ENCODE measurements at regions of chr14 and their contacts with region 1.

Region 1: GRCh38 chr14:75278422-75279161 is at the start of gene FOS:
- DNase-seq: peak; percentile 96
- ATAC-seq: peak; percentile 77
- H3K4me3 ChIP-seq: peak within 1 kb of the TSS; percentile 83
- H3K27ac ChIP-seq: peak within 1 kb of the TSS; percentile 90
- H3K4me1 ChIP-seq: peaks cover 13% of the 10 kb centered on the region
- H3K27me3 ChIP-seq: no peaks in the 10 kb centered on the region
- CTCF ChIP-seq: no peak
- POLR2A ChIP-seq: peak; percentile 99
- RAD21 ChIP-seq: peak; percentile 21; the same call in 1 of the 2 replicates
- total RNA-seq, gene FOS: 53.6 and 86.7 TPM in 2 replicates

Region 2: DNA sequence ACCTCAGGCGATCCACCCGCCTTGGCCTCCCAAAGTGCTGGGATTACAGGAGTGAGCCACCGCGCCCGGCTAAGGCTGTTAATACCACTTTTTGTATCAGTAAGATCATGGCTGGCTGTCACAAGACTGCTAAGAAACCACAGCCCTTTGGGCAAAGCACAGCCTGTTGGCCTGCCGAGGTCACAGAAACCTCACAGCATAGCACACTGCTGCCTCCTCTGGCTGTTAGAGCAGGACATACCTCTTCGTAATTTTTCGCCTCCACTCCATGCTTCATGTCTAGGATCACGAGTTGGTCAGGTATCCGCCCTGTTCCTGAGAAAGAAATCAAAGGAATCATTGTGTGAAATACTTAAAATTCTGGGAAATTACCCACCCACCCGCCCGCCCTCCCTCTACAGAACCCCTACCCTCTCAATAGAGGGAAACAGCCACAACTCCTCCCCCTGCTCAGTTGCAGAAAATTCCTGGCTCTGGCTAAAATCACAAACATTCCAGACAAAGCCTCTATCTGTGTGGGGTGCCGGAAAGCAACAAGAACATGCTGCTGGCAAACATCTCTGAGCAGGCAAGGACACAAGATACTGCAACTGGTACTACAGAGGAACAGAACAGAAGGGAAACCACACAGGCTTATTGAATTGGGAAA is 131.0 kb before region 1 on chr14:
- CTCF ChIA-PET with region 1: no interaction called
- POLR2A ChIA-PET with region 1: no interaction called
- dilution Hi-C with region 1: no loop called
- in situ Hi-C with region 1: no loop called
- intact Hi-C with region 1: loop called (anchors 5 kb)
- DNase-seq: peak; percentile 72
- ATAC-seq: peak; percentile 93
- H3K4me3 ChIP-seq: no peak overlapping the region
- H3K27ac ChIP-seq: peak overlapping the region; percentile 24; the same call in 1 of the 2 replicates
- H3K4me1 ChIP-seq: peaks cover 2% of the 10 kb centered on the region; the same call in 1 of the 2 replicates
- H3K27me3 ChIP-seq: no peaks in the 10 kb centered on the region
- CTCF ChIP-seq: peak; percentile 48
- POLR2A ChIP-seq: no peak
- RAD21 ChIP-seq: peak; percentile 48

Region 3: DNA sequence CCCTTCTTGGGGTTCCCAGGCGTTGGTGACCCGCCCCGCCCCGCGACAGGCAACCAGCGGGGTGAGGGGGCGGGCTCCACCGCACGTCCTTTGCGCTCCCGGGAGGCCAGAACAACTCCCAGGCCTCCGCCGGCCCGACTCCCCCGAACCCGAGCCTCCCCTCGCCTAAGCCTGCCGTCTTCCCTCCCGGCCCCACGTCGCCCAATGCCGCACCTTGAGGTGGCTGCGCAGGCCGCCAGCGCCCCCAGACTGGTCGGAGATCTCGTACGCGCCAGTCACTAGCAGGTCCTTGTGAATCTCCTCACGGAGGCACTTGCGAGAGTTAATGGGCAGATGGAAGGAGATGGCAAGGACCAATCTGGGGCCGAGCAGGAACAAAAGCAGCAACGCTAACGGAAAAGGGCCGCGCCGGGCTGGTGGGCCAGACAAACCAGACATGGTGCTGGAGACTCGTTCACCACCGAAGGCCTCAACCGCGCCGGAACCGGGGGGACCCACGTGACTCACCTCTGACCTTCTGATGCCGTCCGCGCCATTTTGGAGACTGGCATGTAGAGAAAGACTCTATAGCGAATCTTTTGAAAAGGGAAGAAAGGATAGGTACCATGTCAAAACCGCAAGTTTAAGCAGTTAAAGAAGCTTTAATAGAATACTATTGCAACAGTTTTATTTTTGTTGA is 102.3 kb before region 1 on chr14 and contains the start of gene TMED10:
- CTCF ChIA-PET with region 1: no interaction called
- POLR2A ChIA-PET with region 1: interaction called, 3 read pairs
- dilution Hi-C with region 1: no loop called
- in situ Hi-C with region 1: no loop called
- intact Hi-C with region 1: loop called (anchors 5 kb)
- DNase-seq: peak; percentile 85
- ATAC-seq: peak; percentile 85
- H3K4me3 ChIP-seq: peak within 1 kb of the TSS; percentile 75
- H3K27ac ChIP-seq: peak within 1 kb of the TSS; percentile 94
- H3K4me1 ChIP-seq: no peaks in the 10 kb centered on the region
- H3K27me3 ChIP-seq: no peaks in the 10 kb centered on the region
- CTCF ChIP-seq: no peak
- POLR2A ChIP-seq: peak; percentile 82; the same call in 1 of the 2 replicates
- RAD21 ChIP-seq: no peak
- total RNA-seq, gene TMED10: 327 and 441 TPM in 2 replicates

Region 4: GRCh38 chr14:75258615-75259466 is 19.8 kb before region 1 on chr14:
- CTCF ChIA-PET with region 1: no interaction called
- POLR2A ChIA-PET with region 1: interaction called, 5 read pairs
- dilution Hi-C with region 1: no loop called
- in situ Hi-C with region 1: no loop called
- intact Hi-C with region 1: loop called (anchors 2 kb)
- DNase-seq: peak; percentile 100
- ATAC-seq: peak; percentile 99
- H3K4me3 ChIP-seq: peak overlapping the region; percentile 53
- H3K27ac ChIP-seq: peak overlapping the region; percentile 82
- H3K4me1 ChIP-seq: peaks cover 8% of the 10 kb centered on the region
- H3K27me3 ChIP-seq: no peaks in the 10 kb centered on the region
- CTCF ChIP-seq: no peak
- POLR2A ChIP-seq: peak; percentile 71; the same call in 1 of the 2 replicates
- RAD21 ChIP-seq: no peak